ENCODE measurements at regions of chr9 and their contacts with region 1.

Region 1: GRCh38 chr9:129884220-129885017 is 49.2 kb downstream of the USP20 start:
- DNase-seq: peak; percentile 90 to 99
- ATAC-seq: peak; percentile 60 to 81 (median 60)
- H3K4me3 ChIP-seq: peak overlapping the region; percentile 65
- H3K4me3 Mint-ChIP-seq: peak overlapping the region; percentile 86
- H3K27ac ChIP-seq: peak overlapping the region; percentile 98
- H3K27ac Mint-ChIP-seq: peak overlapping the region; percentile 98 to 99
- H3K4me1 ChIP-seq: peaks cover 61% of the 10 kb centered on the region
- H3K4me1 Mint-ChIP-seq: peaks cover 46 to 55% of the 10 kb centered on the region in 2 donors
- H3K27me3 ChIP-seq: no peaks in the 10 kb centered on the region
- H3K27me3 Mint-ChIP-seq: no peaks in the 10 kb centered on the region
- CTCF ChIP-seq: no peak

Region 2: DNA sequence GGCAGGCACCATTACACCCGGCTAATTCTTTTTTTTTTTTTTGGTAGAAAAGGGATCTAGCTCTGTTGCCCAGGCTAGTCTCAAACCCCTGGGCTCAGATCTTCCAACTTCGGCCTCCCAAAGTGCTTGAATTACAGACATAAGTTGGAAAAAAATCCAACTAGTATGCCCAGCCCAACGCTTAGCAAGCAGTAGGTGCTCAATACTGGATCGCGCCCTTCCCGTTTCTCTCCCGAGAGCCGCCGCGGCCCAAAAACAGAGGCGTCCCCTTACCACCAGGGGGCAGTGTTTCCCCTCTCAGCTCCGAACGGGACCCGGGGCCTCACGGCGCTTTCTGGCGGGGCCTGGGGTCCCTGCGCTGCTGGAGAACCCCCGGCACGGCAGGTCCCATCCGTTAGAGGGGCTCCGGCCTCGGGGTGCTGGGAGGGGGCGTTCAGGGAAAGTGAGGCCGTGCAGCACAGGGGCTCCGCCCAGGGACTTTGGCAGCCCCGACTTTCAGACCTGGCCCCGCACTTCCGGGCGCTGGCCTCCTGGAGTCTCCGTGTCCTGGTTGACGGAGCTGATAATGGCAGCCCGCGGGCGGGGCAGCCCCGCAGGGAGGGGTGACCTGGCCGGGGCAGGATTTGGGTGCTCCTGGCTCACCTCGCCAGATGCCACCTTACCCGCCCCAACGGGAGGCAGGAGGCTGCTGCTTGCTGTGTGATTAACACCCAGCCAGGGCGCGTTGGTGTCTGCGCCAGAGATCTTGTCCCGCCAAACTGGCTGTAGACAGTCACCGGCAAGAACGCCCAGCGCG is 146.7 kb before region 1 on chr9:
- intact Hi-C with region 1: no loop called
- DNase-seq: peak; percentile 82 to 94
- ATAC-seq: peak; percentile 88 to 91 (median 89)
- H3K4me3 ChIP-seq: peak overlapping the region; percentile 52
- H3K4me3 Mint-ChIP-seq: peak overlapping the region; percentile 71
- H3K27ac ChIP-seq: peak overlapping the region; percentile 63
- H3K27ac Mint-ChIP-seq: peak overlapping the region in 1 of 2 donors; percentile 77
- H3K4me1 ChIP-seq: peaks cover 15% of the 10 kb centered on the region
- H3K4me1 Mint-ChIP-seq: peaks cover 0 to 14% of the 10 kb centered on the region in 2 donors
- H3K27me3 ChIP-seq: peaks cover 3% of the 10 kb centered on the region
- H3K27me3 Mint-ChIP-seq: peaks cover 0 to 3% of the 10 kb centered on the region in 2 donors
- CTCF ChIP-seq: peak; percentile 96

Region 3: DNA sequence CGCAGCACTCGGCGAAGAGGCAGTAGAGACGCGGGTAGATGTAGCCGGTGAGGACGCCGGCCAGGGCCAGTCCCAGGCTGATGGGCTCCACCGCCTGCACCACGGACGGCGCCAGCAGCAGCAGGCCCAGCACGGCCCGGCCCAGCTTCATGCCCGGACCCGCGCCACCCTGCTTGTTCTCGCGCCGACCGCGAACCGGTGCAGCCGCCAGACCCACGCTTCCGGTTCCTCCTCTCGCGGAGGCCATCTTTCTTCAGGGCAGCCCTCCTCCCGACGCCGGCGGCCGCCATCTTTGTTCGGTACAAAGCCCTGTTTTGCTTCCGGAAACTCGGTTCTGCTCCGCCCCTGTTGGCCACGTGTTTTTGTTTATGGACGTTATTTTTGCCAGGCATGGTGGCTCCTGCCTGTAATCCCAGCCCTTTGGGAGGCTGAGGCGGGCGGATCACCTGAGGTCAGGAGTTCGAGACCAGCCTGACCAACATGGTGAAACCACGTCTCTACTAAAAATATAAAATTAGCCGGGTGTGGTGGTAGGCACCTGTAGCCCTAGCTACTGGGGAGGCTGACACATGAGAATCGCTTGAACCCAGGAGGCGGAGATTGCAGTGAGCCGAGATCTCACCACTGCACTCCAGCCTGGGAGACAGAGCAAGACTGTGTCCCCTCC is 60.4 kb before region 1 on chr9 and contains the start of gene TOR1A:
- intact Hi-C with region 1: loop called (anchors 5 kb)
- DNase-seq: peak; percentile 89 to 95
- ATAC-seq: peak; percentile 90 to 96 (median 91)
- H3K4me3 ChIP-seq: peak within 1 kb of the TSS; percentile 51
- H3K4me3 Mint-ChIP-seq: peak within 1 kb of the TSS; percentile 89
- H3K27ac ChIP-seq: peak within 1 kb of the TSS; percentile 51
- H3K27ac Mint-ChIP-seq: peak within 1 kb of the TSS; percentile 83 to 87
- H3K4me1 ChIP-seq: peaks cover 13% of the 10 kb centered on the region
- H3K4me1 Mint-ChIP-seq: peaks cover 12 to 13% of the 10 kb centered on the region in 2 donors
- H3K27me3 ChIP-seq: no peaks in the 10 kb centered on the region
- H3K27me3 Mint-ChIP-seq: no peaks in the 10 kb centered on the region
- CTCF ChIP-seq: no peak
- total RNA-seq, gene TOR1A: 26.1 to 36.4 (median 34.8) TPM

Region 4: DNA sequence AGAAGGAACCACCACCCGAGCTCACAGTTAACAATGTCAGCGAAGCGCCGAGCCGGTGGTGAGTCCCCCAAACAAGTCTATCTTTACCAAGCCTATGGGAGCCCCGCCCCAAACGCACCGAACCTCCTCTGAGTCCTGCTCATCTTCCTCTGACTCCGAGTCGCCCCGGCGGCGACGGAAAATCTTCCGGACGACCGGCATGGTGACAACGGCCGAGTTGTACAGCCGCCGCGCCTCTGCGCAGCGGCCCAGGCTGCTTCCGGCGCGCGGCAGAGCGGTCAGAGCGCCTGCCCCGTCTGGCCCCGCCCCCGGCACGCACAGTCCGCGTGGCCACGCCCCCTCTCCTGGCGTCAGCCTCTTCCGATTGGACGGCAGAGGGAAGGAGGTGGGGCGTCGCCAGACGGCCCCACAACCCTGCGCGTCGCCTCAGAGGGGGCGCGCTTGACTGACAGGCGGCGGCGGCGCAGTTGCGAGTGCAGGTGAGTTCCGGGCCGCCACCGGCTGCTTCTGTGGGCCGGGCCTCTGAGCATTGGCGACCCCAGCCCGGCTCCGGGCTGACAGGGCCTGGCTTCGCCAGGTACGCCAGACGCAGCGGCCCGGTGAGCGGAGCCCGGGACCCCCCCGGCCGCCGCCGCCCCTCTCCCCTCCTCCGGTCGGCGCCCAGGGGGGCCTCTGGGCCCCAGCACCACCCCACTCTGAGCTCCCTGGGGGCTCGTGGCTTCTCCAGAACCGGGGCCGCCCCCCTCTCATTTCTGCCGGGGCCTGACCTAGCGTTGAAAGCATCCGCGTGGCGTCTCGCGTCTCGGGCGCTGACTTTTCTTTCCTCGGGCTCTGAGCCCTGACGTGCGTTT is 49.2 kb before region 1 on chr9 and contains the starts of genes C9orf78 and USP20:
- intact Hi-C with region 1: loop called (anchors 2 kb)
- DNase-seq: peak; percentile 97 to 99
- ATAC-seq: peak; percentile 96 to 100 (median 96)
- H3K4me3 ChIP-seq: peak within 1 kb of the TSS; percentile 98
- H3K4me3 Mint-ChIP-seq: peak within 1 kb of the TSS; percentile 99
- H3K27ac ChIP-seq: peak within 1 kb of the TSS; percentile 89
- H3K27ac Mint-ChIP-seq: peak within 1 kb of the TSS; percentile 98
- H3K4me1 ChIP-seq: peaks cover 43% of the 10 kb centered on the region
- H3K4me1 Mint-ChIP-seq: peaks cover 54% of the 10 kb centered on the region in 2 donors
- H3K27me3 ChIP-seq: no peaks in the 10 kb centered on the region
- H3K27me3 Mint-ChIP-seq: no peaks in the 10 kb centered on the region
- CTCF ChIP-seq: no peak
- total RNA-seq, gene C9orf78: 93.7 to 97.9 (median 97.6) TPM
- total RNA-seq, gene USP20: 66.8 to 86.1 (median 80.3) TPM

Region 5: GRCh38 chr9:129868916-129869486 is 15.4 kb before region 1 on chr9:
- intact Hi-C with region 1: loop called (anchors 1 kb)
- DNase-seq: peak; percentile 85 to 96
- ATAC-seq: peak; percentile 87 to 93 (median 92)
- H3K4me3 ChIP-seq: peak overlapping the region; percentile 5
- H3K4me3 Mint-ChIP-seq: peak overlapping the region; percentile 65
- H3K27ac ChIP-seq: peak overlapping the region; percentile 85
- H3K27ac Mint-ChIP-seq: peak overlapping the region; percentile 85 to 92
- H3K4me1 ChIP-seq: peaks cover 51% of the 10 kb centered on the region
- H3K4me1 Mint-ChIP-seq: peaks cover 50 to 57% of the 10 kb centered on the region in 2 donors
- H3K27me3 ChIP-seq: no peaks in the 10 kb centered on the region
- H3K27me3 Mint-ChIP-seq: no peaks in the 10 kb centered on the region
- CTCF ChIP-seq: no peak

Region 6: GRCh38 chr9:129944506-129945116 is 60.2 kb after region 1 on chr9:
- intact Hi-C with region 1: loop called (anchors 1 kb)
- DNase-seq: peak; percentile 37 to 87
- ATAC-seq: peak; percentile 91 to 94 (median 93)
- H3K4me3 ChIP-seq: no peak overlapping the region
- H3K4me3 Mint-ChIP-seq: peak overlapping the region; percentile 71
- H3K27ac ChIP-seq: peak overlapping the region; percentile 92
- H3K27ac Mint-ChIP-seq: peak overlapping the region; percentile 81 to 93
- H3K4me1 ChIP-seq: peaks cover 30% of the 10 kb centered on the region
- H3K4me1 Mint-ChIP-seq: peaks cover 47 to 52% of the 10 kb centered on the region in 2 donors
- H3K27me3 ChIP-seq: no peaks in the 10 kb centered on the region
- H3K27me3 Mint-ChIP-seq: no peaks in the 10 kb centered on the region
- CTCF ChIP-seq: no peak

Region 7: DNA sequence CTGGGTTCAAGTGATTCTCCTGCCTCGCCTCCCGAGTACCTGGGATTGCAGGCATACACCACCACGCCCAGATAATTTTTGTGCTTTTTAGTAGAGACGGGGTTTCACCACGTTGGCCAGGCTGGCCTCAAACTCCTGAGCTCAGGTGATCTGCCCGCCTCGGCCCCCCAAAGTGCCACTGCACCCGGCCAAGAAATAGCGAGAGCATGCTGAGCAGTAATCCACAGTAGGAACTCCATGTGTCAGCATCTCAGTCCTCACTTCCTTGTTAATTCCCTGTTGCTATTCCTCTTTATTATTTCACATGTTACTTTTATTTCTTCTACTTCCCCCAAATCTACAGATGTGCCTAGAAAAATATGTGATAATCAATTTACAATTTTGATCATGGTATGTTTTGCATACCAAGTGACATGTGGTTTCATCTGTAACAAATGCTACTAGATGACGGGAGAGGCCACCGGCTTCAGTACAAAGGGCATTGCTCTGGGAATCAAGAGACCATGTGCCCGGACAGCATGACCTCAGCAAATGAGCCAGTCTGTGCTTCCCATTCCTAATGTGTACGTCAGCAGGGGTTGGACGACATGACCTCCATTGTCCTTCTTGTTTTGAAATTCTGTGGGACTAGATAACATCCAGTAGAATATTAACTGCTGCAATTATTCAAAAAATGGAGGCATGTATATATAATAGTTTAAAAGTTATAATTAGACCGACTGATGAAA is 96.9 kb after region 1 on chr9:
- intact Hi-C with region 1: no loop called
- DNase-seq: no peak
- ATAC-seq: no peak
- H3K4me3 ChIP-seq: no peak overlapping the region
- H3K4me3 Mint-ChIP-seq: peak overlapping the region; percentile 10
- H3K27ac ChIP-seq: no peak overlapping the region
- H3K27ac Mint-ChIP-seq: peak overlapping the region; percentile 63 to 76
- H3K4me1 ChIP-seq: peaks cover 18% of the 10 kb centered on the region
- H3K4me1 Mint-ChIP-seq: peaks cover 34 to 53% of the 10 kb centered on the region in 2 donors
- H3K27me3 ChIP-seq: no peaks in the 10 kb centered on the region
- H3K27me3 Mint-ChIP-seq: no peaks in the 10 kb centered on the region
- CTCF ChIP-seq: no peak

Region 8: DNA sequence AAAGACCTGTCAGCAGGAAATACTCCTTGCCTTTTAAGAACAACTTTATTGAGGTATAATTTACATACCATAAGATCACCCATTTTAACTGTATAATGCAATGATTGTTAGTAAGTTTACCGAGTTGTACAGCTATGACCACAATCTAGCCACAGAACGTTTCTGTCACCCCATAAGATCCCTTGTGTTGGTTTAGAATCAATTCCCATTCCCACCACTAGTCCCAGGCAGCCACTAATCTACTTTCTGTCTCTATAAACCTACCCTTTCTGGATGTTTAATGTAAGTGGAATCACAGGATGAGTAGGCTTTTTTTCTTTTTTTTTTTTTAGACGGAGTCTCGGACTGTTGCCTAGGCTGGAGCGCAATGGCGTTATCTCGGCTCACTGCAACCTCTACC is 173.7 kb after region 1 on chr9:
- intact Hi-C with region 1: no loop called
- DNase-seq: peak in 1 of 2 donors; percentile 40
- ATAC-seq: no peak
- H3K4me3 ChIP-seq: no peak overlapping the region
- H3K4me3 Mint-ChIP-seq: no peak overlapping the region
- H3K27ac ChIP-seq: no peak overlapping the region
- H3K27ac Mint-ChIP-seq: no peak overlapping the region
- H3K4me1 ChIP-seq: peaks cover 20% of the 10 kb centered on the region
- H3K4me1 Mint-ChIP-seq: peaks cover 16 to 23% of the 10 kb centered on the region in 2 donors
- H3K27me3 ChIP-seq: no peaks in the 10 kb centered on the region
- H3K27me3 Mint-ChIP-seq: no peaks in the 10 kb centered on the region
- CTCF ChIP-seq: no peak

Measured in natural killer cell (primary cell).